ENCODE measurements at regions of chr1 and their contacts with region 1.

Region 1: DNA sequence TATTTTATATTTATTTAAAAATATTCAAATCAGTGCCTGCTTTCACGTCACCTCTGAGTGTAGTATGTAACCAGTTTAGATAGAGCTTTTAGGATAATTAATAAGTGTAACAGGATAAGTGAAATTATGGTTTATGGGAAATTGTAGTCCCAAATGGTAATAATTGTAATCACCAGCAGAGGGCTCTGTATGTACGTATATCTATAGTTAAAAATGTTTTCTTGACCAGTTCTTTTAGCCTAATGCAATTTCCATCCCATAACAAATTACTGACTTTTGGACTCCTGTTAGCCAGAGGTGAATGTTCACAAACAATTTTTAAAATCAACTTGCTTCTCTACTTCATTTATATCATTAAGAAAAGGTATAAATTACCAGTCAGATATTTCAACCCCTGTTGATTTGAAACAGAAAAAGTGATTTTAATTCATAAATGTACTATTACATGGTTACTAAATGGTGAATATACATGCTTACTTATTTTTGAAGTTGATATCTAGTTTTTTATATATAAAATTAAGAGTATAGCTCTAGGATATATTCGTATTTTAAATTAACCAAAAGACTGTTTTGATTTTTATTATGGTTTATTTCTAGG is 25.3 kb downstream of the SLC30A7 start:
- DNase-seq: no peak

Region 2: GRCh38 chr1:100811808-100812207 is 109.4 kb before region 1 on chr1:
- intact Hi-C with region 1: no loop called
- DNase-seq: no peak

Region 3: GRCh38 chr1:100866041-100866900 is 54.9 kb before region 1 on chr1:
- intact Hi-C with region 1: no loop called
- DNase-seq: no peak

Region 4: DNA sequence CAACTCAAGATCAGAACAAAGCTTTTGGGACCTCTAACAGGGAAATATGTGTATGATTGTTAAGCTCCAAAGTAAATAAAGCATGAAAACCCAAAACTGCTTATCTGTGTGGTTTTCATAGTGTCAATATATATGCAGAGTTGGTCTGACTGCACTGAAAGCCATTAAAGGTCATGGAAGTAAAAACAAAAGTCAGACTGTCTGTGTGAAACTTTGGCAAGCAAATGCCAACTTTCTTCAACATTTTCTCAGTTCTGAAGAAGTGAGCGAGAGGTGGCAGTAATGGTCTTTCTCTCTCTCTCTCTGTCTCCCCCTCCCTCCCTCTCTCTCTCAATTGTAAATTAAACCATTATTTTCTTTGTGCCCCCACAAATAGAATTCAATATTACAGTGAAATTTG is 215.5 kb after region 1 on chr1:
- intact Hi-C with region 1: loop called (anchors 10 kb)
- DNase-seq: no peak

Region 5: DNA sequence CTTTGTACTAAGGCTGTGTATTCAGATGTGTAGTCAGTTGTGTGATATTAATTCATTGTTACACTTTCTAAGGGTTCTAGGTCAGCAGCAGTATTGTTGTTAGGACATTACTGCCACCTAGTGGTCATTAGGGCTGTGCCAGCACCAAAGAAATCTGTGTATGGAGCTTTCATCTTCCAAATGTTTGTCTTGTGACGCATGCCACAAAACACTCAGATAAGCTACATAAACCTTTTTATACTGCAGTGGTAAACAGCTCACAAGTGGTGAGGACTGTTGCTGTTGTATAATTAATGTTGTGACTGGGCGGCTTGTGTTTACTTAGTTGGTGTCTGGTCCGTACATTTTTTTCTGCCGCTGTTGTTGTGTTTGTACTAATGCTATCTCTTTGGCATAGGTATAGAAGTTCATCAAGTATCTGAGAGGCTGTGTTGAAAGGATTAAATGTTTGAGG is 367.3 kb after region 1 on chr1:
- intact Hi-C with region 1: loop called (anchors 2 kb)
- DNase-seq: no peak

Region 6: GRCh38 chr1:101309334-101310311 is 388.4 kb after region 1 on chr1:
- intact Hi-C with region 1: loop called (anchors 5 kb)
- DNase-seq: peak; percentile 82

Region 7: DNA sequence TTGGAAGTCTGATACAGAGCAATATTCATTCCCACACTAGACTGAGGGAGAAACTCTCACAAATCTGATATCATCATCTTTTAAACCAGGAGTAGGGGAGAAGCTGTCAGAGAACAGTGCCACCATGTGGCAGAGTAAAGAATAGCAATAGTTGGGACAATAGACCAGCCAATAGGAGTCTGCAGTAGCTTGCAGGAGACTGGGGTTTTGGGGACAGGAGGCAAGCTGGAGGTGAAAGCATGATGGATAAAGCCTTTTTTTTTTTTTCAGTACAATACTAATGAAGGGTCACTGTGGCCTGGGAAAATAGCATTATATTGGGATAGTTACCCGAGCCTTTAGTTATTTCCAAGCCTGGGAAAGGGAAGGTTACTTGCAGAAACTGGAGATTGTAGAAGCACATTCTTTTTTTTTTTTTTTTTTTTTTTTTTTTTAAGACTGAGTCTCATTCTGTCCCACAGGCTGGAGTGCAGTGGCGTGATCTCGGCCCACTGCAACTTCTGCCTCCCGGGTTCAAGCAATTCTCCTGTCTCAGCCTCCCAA is 436.3 kb after region 1 on chr1:
- intact Hi-C with region 1: loop called (anchors 2 kb)
- DNase-seq: no peak

Measured in cardiac septum (tissue), 1 donor.